ENCODE measurements at regions of chr11 and their contacts with region 1.

Region 1: GRCh38 chr11:28770806-28771205 is 662.6 kb downstream of the METTL15 start:
- DNase-seq: no peak
- ATAC-seq: no peak
- H3K4me3 ChIP-seq: no peak overlapping the region
- H3K27ac ChIP-seq: no peak overlapping the region
- H3K4me1 ChIP-seq: no peaks in the 10 kb centered on the region
- H3K27me3 ChIP-seq: no peaks in the 10 kb centered on the region
- CTCF ChIP-seq: no peak

Region 2: GRCh38 chr11:28836285-28837081 is 65.7 kb after region 1 on chr11:
- intact Hi-C with region 1: loop called in 1 of 3 experiments (anchors 10 kb)
- DNase-seq: no peak
- ATAC-seq: no peak
- H3K4me3 ChIP-seq: no peak overlapping the region
- H3K27ac ChIP-seq: no peak overlapping the region
- H3K4me1 ChIP-seq: no peaks in the 10 kb centered on the region
- H3K27me3 ChIP-seq: no peaks in the 10 kb centered on the region
- CTCF ChIP-seq: no peak